Calu3 (cell line): ENCODE measurements at regions of chr17 and their contacts with region 1.

Region 1: GRCh38 chr17:39777534-39778365 is 40.0 kb downstream of the GRB7 start:
- DNase-seq: no peak
- H3K4me3 Mint-ChIP-seq: no peak overlapping the region
- H3K27ac Mint-ChIP-seq: no peak overlapping the region
- H3K4me1 Mint-ChIP-seq: peaks cover 48% of the 10 kb centered on the region
- H3K27me3 Mint-ChIP-seq: no peaks in the 10 kb centered on the region
- CTCF ChIP-seq: no peak

Region 2: GRCh38 chr17:39385040-39385439 is 392.7 kb before region 1 on chr17:
- CTCF ChIA-PET with region 1: no interaction called
- intact Hi-C with region 1: no loop called
- DNase-seq: no peak
- H3K4me3 Mint-ChIP-seq: no peak overlapping the region
- H3K27ac Mint-ChIP-seq: no peak overlapping the region
- H3K4me1 Mint-ChIP-seq: no peaks in the 10 kb centered on the region
- H3K27me3 Mint-ChIP-seq: no peaks in the 10 kb centered on the region
- CTCF ChIP-seq: no peak

Region 3: GRCh38 chr17:39687811-39688518 is 89.8 kb before region 1 on chr17 and contains the start of gene PGAP3:
- CTCF ChIA-PET with region 1: interaction called, 34,714 read pairs
- intact Hi-C with region 1: loop called (anchors 1 kb)
- DNase-seq: peak; percentile 100
- H3K4me3 Mint-ChIP-seq: peak within 1 kb of the TSS; percentile 64
- H3K27ac Mint-ChIP-seq: peak within 1 kb of the TSS; percentile 63
- H3K4me1 Mint-ChIP-seq: peaks cover 27% of the 10 kb centered on the region
- H3K27me3 Mint-ChIP-seq: no peaks in the 10 kb centered on the region
- CTCF ChIP-seq: no peak
- total RNA-seq, gene PGAP3: 1,186 and 1,276 TPM in 2 replicates

Region 4: DNA sequence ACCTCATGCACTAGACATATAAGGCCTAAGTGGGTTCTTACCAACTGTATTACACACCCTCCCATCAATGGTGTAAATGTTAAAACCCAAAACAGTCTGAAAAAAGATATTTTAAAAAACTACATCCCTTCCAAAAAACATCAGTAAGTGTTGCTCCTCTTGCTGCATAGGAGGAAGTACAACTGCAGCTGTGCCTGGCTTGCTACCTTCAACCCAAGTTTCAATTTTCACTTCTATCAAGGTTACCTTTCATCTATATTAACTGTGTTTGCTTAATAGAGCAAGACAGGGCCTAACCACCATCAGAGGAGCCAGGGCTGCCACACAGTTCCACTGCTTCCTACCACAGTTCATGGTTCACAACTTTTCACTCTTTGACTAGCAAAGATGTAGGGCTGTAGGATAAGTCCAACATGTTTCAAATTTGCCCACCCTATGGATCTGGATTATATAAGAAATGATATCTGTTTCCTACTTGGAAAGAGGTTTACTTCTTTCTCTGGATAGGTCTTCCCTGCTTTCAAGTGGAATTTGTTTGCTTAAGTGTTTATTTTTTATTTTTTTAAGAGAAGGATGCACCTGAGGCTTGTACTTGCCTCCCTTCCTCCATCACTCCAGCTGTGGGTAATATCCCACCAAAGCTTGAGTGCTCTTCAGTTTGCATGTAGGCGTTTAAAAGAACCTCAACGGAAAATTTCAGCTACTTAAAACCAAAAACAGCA is 16.7 kb after region 1 on chr17:
- CTCF ChIA-PET with region 1: interaction called, 577 read pairs
- intact Hi-C with region 1: no loop called
- DNase-seq: peak; percentile 73
- H3K4me3 Mint-ChIP-seq: no peak overlapping the region
- H3K27ac Mint-ChIP-seq: no peak overlapping the region
- H3K4me1 Mint-ChIP-seq: no peaks in the 10 kb centered on the region
- H3K27me3 Mint-ChIP-seq: no peaks in the 10 kb centered on the region
- CTCF ChIP-seq: no peak

Region 5: GRCh38 chr17:39835038-39835786 is 57.5 kb after region 1 on chr17:
- CTCF ChIA-PET with region 1: interaction called, 920 read pairs
- intact Hi-C with region 1: no loop called
- DNase-seq: peak; percentile 79
- H3K4me3 Mint-ChIP-seq: no peak overlapping the region
- H3K27ac Mint-ChIP-seq: no peak overlapping the region
- H3K4me1 Mint-ChIP-seq: no peaks in the 10 kb centered on the region
- H3K27me3 Mint-ChIP-seq: no peaks in the 10 kb centered on the region
- CTCF ChIP-seq: no peak

Region 6: DNA sequence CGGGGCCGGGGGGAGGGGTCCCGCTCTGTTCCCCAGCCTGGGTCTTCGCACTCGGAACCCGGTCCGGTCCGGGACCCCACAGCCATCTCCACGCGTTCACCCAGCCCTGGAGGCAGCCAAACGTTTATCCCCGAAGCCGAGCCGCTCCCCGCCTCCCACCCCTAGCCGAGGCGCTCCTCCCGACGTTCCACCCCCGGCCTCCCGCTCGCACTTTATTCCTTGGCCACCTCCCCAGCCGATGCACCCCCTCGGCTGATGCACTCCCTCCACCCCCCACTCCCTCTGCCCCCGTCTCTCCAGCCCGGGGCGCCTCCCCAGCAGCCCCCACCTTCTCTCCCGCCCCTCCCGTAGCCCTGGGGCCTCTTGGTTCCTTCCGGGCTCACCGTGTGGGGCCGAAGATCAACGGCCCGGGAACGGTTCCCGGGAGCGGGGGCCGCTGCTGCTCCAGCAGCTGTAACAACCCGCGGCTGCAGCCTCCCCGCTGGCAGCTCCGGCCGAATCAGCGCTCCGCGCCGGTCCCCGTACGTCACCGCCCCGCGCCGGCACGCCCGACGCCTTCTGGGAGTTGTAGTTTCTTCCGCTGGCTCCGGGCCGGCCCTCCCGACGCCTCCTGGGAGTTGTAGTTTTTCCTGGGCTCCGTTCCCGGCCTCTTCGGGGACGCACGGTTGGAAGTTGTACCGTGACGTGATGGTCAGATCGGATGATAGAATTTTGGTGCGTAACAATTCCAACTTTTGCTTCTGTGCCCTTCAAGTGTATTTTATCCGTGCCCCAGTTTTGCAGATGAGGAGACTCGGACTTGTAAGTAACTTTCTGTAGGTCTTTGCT is 149.6 kb after region 1 on chr17 and contains the starts of genes LRRC3C and ORMDL3:
- CTCF ChIA-PET with region 1: interaction called, 1,212 read pairs
- intact Hi-C with region 1: loop called (anchors 1 kb)
- DNase-seq: no peak
- H3K4me3 Mint-ChIP-seq: peak within 1 kb of the TSS; percentile 74
- H3K27ac Mint-ChIP-seq: peak within 1 kb of the TSS; percentile 66
- H3K4me1 Mint-ChIP-seq: peaks cover 60% of the 10 kb centered on the region
- H3K27me3 Mint-ChIP-seq: no peaks in the 10 kb centered on the region
- CTCF ChIP-seq: no peak
- total RNA-seq, gene LRRC3C: not detected in 2 replicates
- total RNA-seq, gene ORMDL3: 1,738 and 1,968 TPM in 2 replicates

Region 7: DNA sequence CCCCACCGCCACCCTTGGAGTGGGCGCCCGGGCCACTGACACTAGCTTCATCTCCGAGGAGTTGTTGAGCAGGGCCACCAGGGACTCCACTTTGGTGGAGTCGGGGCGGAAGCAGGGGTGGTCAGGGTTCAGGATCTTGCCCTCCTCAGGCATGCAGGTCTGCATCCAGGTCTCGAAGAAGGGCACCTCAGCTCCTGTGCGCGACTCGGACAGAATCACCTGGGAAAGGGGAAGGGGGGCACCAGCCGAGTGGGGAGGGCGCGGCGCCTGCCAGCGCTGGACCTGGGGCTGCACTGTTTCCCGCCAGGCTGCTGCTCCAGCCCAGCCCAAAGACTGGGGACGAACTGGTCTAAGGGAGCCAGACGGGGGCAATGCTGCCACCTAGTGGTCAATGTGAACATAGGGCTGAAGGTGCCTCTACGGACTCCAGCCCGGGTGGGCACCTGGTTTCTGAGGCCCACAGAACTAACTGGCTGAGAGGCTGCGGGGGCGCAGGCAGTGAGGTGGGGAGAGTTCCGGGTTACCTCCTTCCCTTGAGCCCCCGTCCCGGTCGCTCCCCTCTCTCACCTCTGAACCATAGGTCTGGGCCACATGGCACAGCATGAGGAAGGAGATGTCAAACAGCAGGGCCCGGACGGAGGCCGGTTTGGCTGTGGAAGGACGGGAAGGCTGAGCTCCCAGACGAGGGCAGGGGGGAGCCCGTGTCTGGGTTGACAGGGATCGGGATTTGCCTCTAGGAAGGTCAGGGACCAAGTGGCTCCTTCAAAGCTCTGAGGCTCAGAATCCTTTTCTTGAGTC is 249.3 kb after region 1 on chr17:
- CTCF ChIA-PET with region 1: interaction called, 11 read pairs
- intact Hi-C with region 1: no loop called
- DNase-seq: peak; percentile 100
- H3K4me3 Mint-ChIP-seq: no peak overlapping the region
- H3K27ac Mint-ChIP-seq: no peak overlapping the region
- H3K4me1 Mint-ChIP-seq: peaks cover 30% of the 10 kb centered on the region
- H3K27me3 Mint-ChIP-seq: no peaks in the 10 kb centered on the region
- CTCF ChIP-seq: no peak